Gastrocnemius medialis (tissue), 4 donors: ENCODE measurements at regions of chr9 and their contacts with region 1.

Region 1: DNA sequence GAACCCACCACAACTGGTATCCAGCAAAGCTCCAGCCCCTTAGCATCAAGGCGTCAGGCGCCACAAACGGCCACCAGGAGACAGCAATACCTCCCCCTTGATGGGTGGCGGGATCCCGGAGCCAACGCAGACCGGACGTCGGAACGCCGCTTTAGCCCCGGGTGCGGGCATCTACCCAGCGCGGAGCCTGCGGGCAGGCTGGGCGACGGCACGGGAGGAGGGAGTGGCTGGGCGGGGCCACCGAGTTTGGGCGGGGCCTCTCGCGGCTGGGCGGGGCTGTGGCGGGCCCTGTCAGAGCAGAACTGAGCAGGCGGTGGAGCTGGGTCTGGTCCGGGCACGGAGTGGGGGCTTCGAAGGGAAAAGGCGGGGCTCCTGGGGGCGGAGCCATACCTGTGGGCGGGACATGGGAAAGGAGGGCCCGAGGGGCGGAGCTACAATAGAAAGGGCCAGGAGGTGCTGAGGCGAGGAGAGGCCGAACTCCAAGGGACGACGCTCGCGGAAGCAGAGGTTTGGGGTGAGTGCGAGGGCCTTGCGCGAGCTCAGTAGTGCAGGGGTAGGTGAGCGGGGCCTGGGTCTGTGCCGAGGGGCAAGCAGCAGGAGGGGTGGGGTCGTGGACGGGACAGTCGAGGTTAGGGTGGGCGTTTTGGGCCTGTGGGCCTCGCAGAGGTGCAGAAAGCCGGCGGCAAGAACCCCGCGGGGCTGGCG is 40.2 kb upstream of the GARNL3 start:
- DNase-seq: peak; percentile 88 to 94
- ATAC-seq: peak; percentile 76 to 80
- H3K4me3 ChIP-seq: peak overlapping the region; percentile 72 to 97 (median 84)
- H3K27ac ChIP-seq: peak overlapping the region; percentile 81 to 97 (median 89)
- H3K4me1 ChIP-seq: peaks cover 0 to 10% of the 10 kb centered on the region in 2 donors
- H3K27me3 ChIP-seq: no peaks in the 10 kb centered on the region
- CTCF ChIP-seq: peak in 2 of 5 experiments; percentile 10 to 20
- POLR2A ChIP-seq: no peak

Region 2: GRCh38 chr9:127244609-127245601 is 20.6 kb after region 1 on chr9:
- in situ Hi-C with region 1: no loop called
- intact Hi-C with region 1: loop called (anchors 1 kb)
- DNase-seq: peak; percentile 96 to 97
- ATAC-seq: peak; percentile 97 to 98
- H3K4me3 ChIP-seq: peak overlapping the region; percentile 61 to 85 (median 72)
- H3K27ac ChIP-seq: peak overlapping the region; percentile 81 to 95 (median 86)
- H3K4me1 ChIP-seq: peaks cover 5 to 12% of the 10 kb centered on the region in 2 donors
- H3K27me3 ChIP-seq: no peaks in the 10 kb centered on the region
- CTCF ChIP-seq: no peak
- POLR2A ChIP-seq: peak; percentile 43 to 61

Region 3: GRCh38 chr9:127347831-127348779 is 123.8 kb after region 1 on chr9:
- in situ Hi-C with region 1: no loop called
- intact Hi-C with region 1: loop called (anchors 5 kb)
- DNase-seq: no peak
- ATAC-seq: peak; percentile 44 to 57
- H3K4me3 ChIP-seq: no peak overlapping the region
- H3K27ac ChIP-seq: peak overlapping the region in 1 of 4 donors; percentile 62
- H3K4me1 ChIP-seq: peaks cover 15 to 28% of the 10 kb centered on the region in 2 donors
- H3K27me3 ChIP-seq: no peaks in the 10 kb centered on the region
- CTCF ChIP-seq: peak in 4 of 5 experiments; percentile 13 to 49 (median 30)
- POLR2A ChIP-seq: no peak

Region 4: GRCh38 chr9:127396808-127397497 is 172.6 kb after region 1 on chr9 and contains the start of gene SLC2A8:
- in situ Hi-C with region 1: no loop called
- intact Hi-C with region 1: loop called (anchors 5 kb)
- DNase-seq: peak; percentile 99 to 100
- ATAC-seq: peak; percentile 94 to 97
- H3K4me3 ChIP-seq: peak within 1 kb of the TSS; percentile 75 to 95 (median 81)
- H3K27ac ChIP-seq: peak within 1 kb of the TSS; percentile 81 to 95 (median 91)
- H3K4me1 ChIP-seq: peaks cover 17 to 19% of the 10 kb centered on the region in 2 donors
- H3K27me3 ChIP-seq: no peaks in the 10 kb centered on the region
- CTCF ChIP-seq: peak in 3 of 5 experiments; percentile 29 to 52 (median 31)
- POLR2A ChIP-seq: peak; percentile 84 to 86
- total RNA-seq, gene SLC2A8: 19.8 to 31.2 (median 25.7) TPM

Region 5: DNA sequence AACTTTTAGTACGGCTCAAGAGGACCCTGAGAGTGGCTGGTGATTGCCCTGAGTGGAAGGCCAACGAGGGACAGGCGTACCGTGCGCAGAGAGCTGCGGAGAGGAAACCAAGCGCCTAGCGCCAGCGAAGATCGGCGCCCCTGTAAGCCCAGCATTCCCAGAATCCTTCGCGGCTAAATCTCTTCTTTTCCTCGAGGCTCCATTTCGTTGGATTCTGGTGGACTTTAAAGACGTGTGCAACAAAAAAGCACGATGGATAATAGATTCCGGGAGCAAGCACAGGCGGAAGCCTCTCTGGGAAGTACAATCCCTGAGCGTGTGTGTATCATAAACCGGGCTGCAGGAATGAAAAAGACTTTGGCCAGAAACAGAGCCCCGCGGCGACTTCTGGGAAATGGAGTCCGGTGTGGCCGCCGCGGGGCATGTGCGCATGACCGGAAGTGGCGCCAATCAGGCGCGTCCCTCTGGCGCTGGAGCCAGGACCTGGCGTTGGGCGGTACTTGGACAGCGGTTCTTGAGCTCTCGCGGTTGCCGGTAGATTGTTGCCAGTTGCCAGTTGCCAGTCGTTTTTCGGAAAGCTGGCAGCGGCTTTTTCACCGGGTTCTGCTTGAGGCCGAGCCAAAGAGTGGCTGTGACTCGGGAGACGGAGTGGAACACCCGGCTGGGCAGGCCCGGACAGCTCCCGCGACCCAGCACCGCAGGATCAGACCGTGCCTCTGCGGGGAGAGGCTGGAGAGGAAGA is 199.8 kb after region 1 on chr9 and contains the start of gene ZNF79:
- in situ Hi-C with region 1: no loop called
- intact Hi-C with region 1: loop called (anchors 1 kb)
- DNase-seq: peak; percentile 85 to 93
- ATAC-seq: peak; percentile 92 to 94
- H3K4me3 ChIP-seq: peak within 1 kb of the TSS; percentile 84 to 98 (median 92)
- H3K27ac ChIP-seq: peak within 1 kb of the TSS; percentile 91 to 97 (median 95)
- H3K4me1 ChIP-seq: peaks cover 34 to 36% of the 10 kb centered on the region in 2 donors
- H3K27me3 ChIP-seq: no peaks in the 10 kb centered on the region
- CTCF ChIP-seq: no peak
- POLR2A ChIP-seq: peak; percentile 71 to 79
- total RNA-seq, gene ZNF79: 3.9 to 9.3 (median 6.4) TPM

Region 6: GRCh38 chr9:127450830-127451724 is 226.7 kb after region 1 on chr9 and contains the starts of genes LRSAM1 and RPL12:
- in situ Hi-C with region 1: no loop called
- intact Hi-C with region 1: loop called (anchors 5 kb)
- DNase-seq: peak; percentile 94
- ATAC-seq: peak; percentile 86
- H3K4me3 ChIP-seq: peak within 1 kb of the TSS; percentile 76 to 97 (median 88)
- H3K27ac ChIP-seq: peak within 1 kb of the TSS; percentile 93 to 97 (median 94)
- H3K4me1 ChIP-seq: peaks cover 37 to 48% of the 10 kb centered on the region in 2 donors
- H3K27me3 ChIP-seq: no peaks in the 10 kb centered on the region
- CTCF ChIP-seq: no peak
- POLR2A ChIP-seq: peak; percentile 99 to 100
- total RNA-seq, gene LRSAM1: 10.2 to 17.3 (median 16.1) TPM
- total RNA-seq, gene RPL12: 1,654 to 2,251 (median 1,749) TPM

Region 7: DNA sequence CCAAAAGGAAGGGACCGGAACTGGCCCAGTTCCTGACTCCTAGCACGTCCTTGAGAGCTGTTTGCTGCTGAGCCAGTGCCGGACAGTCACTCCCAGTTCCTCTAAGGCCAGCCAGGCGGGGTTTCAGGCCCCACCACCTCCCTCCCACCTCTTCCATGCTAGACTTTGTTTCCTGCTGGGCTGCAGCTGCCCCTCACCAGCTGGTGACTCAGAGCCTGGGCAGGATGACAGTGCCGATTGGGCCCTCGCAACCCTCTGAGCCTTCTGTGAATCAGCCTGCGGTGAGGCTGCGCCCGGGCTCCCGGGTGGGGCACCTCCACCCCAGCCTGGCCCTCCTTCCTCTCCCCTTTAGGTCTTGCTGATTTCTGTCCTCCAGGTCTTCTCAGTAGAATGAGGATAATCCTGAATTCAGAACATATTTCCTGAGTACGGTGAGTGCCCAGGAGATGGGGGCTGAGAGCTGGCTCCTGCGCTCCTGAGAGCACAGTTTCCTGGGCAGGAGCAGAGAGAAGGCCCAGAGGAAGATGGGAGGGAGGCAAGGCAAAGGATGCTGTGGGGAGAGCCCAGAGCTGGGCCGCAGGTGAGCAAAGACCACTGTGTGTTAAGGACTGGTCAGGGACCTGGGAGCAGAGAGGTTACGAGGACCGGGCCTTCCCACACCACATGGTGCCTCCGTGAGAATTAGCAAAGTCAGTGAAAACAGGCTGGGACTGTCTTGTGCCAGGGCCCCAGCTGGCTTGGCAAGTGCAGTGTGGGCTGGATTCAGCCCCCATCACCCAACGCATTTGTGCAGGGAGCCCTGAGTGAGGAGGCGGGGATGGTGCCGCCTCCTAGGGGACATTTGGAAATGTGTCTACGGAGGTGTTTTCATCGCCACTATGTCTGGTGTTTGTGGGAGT is 354.9 kb after region 1 on chr9:
- in situ Hi-C with region 1: no loop called
- intact Hi-C with region 1: loop called (anchors 10 kb)
- DNase-seq: peak; percentile 69 to 77
- ATAC-seq: peak; percentile 86 to 88
- H3K4me3 ChIP-seq: peak overlapping the region in 3 of 4 donors; percentile 2 to 29 (median 24)
- H3K27ac ChIP-seq: peak overlapping the region; percentile 65 to 86 (median 79)
- H3K4me1 ChIP-seq: peaks cover 0 to 11% of the 10 kb centered on the region in 2 donors
- H3K27me3 ChIP-seq: no peaks in the 10 kb centered on the region
- CTCF ChIP-seq: peak in 2 of 5 experiments; percentile 23 to 26
- POLR2A ChIP-seq: peak; percentile 21 to 23